ENCODE measurements at regions of chr15 and their contacts with region 1.

Region 1: GRCh38 chr15:55108858-55109518 is 87.8 kb downstream of the RSL24D1 start:
- DNase-seq: peak; percentile 73 to 87 (median 85)
- H3K4me3 ChIP-seq: no peak overlapping the region
- H3K27ac ChIP-seq: no peak overlapping the region
- H3K4me1 ChIP-seq: peaks cover 0 to 5% (median 3%) of the 10 kb centered on the region in 4 experiments
- H3K27me3 ChIP-seq: no peaks in the 10 kb centered on the region

Region 2: GRCh38 chr15:54082836-54083492 is 1026.0 kb before region 1 on chr15:
- CTCF ChIA-PET with region 1: interaction called, 18 read pairs
- POLR2A ChIA-PET with region 1: no interaction called
- DNase-seq: peak; percentile 34 to 61 (median 35)
- H3K4me3 ChIP-seq: no peak overlapping the region
- H3K27ac ChIP-seq: no peak overlapping the region
- H3K4me1 ChIP-seq: no peaks in the 10 kb centered on the region
- H3K27me3 ChIP-seq: no peaks in the 10 kb centered on the region